Activated B cell treated with CpG ODN at 0.5 μM for 24 hours (primary cell): ENCODE measurements at regions of chr7 and their contacts with region 1.

Region 1: DNA sequence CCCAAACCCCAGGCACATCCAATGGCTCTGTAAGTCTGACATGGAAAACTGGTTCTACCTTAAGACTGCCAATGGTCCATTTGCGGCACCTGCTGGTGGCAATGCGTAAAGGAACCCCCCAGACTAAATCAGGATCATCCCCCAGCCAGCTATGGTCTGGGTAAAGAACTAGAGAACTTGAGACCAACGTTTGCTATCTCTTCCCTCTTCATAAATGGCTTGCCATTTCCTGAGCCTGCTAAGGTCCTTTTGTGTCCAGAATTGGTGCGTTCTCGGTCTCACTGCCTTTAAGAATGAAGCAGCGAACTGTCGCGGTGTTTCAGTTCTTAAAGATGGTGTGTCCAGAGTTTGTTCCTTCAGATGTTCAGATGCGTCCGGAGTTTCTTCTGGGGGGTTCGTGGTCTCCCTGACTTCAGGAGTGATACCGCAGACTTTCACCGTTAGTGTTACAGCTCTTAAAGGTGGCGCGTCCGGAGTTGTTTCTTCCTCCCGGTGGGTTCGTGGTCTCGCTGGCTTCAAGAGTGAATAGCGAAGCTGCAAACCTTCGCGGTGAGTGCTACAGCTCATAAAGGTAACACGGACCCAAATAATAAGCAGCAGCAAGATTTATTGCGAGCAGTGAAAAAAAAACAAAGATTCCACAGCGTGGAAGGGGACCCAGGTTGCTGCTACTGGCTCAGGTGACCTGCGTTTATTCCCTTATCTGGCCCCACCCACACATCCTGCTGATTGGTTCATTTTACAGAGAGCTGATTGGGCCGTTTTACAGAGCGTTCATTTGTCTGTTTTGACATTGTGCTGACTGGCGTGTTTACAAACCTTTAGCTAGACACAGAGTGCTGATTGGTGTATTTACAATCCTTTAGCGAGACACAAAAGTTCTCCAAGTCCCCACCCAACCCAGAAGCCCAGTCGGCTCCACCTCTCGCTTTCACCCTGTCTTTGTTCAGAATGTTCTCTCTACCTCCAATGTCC is 95.4 kb downstream of the ELMO1 start:
- DNase-seq: peak; percentile 44
- ATAC-seq: peak; percentile 70
- H3K4me3 Mint-ChIP-seq: peak overlapping the region; percentile 96
- H3K27ac Mint-ChIP-seq: peak overlapping the region; percentile 86
- H3K4me1 Mint-ChIP-seq: peaks cover 59% of the 10 kb centered on the region
- H3K27me3 Mint-ChIP-seq: no peaks in the 10 kb centered on the region
- CTCF ChIP-seq: peak; percentile 46

Region 2: DNA sequence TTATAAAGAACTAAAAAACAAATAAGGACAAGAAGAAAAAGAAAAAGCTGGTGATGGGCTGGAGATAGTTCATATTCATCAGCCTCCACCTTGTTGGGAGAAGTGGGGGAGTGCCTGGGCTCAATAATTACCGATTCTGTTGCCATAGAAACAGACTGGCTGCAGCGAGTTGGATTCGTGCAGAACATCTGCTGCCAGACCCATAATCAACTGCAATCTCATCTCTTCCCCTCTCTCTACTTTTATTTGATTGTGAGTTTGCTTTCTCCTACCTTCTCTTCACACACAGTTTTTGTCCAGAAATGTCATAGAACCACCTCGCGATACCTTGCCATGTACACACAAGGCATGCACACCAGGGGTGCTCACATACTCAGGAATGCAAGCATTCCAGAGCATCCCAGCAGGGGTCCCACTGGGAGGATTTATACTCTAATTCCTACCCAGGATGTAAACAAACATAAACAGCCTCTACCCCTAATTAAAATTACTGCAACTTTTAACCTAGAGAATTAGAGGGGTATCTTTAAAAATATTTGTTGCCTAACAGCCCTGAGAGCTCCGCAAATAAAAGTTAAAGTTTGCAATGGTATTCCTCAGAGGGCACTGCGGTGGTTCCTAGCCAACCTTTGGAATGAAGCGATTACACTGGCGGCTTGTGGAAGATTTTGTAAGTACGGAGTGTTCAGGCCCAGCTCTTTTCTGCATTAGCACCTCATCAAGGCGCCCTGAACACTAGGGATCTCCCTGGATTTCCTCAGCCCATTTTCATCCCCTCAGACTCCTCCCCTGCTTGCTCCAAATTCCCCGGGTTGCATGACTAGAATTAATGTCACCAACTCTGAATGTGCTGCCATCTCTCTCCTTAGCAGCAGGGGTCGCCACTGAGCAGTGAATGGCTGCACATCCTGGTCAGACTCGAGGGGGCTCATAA is 366.6 kb before region 1 on chr7:
- CTCF ChIA-PET with region 1: no interaction called
- POLR2A ChIA-PET with region 1: no interaction called
- intact Hi-C with region 1: loop called (anchors 5 kb)
- DNase-seq: peak; percentile 30
- ATAC-seq: peak; percentile 71
- H3K4me3 Mint-ChIP-seq: no peak overlapping the region
- H3K27ac Mint-ChIP-seq: no peak overlapping the region
- H3K4me1 Mint-ChIP-seq: peaks cover 33% of the 10 kb centered on the region
- H3K27me3 Mint-ChIP-seq: no peaks in the 10 kb centered on the region
- CTCF ChIP-seq: no peak

Region 3: DNA sequence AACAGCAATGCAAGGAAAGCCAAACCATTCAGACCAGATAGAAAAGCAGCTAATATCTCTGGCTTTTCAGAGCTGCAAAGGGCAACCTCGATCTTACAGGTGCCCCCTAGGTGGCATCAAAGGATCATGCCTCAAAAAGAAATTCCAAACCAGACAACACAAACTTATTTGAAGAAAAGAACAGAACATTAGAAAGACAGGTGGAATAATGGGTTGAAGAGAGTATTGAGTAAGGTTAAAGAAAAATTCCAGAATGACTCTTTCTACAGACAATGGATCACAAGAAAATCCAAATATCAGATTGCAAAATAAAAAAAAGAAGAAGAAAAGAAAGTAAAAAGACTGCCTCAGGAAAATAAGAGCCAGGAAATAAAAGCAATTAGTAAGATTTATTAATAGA is 118.3 kb before region 1 on chr7:
- CTCF ChIA-PET with region 1: interaction called, 86 read pairs
- POLR2A ChIA-PET with region 1: interaction called, 5 read pairs
- intact Hi-C with region 1: loop called (anchors 1 kb)
- DNase-seq: no peak
- ATAC-seq: no peak
- H3K4me3 Mint-ChIP-seq: no peak overlapping the region
- H3K27ac Mint-ChIP-seq: no peak overlapping the region
- H3K4me1 Mint-ChIP-seq: peaks cover 2% of the 10 kb centered on the region
- H3K27me3 Mint-ChIP-seq: no peaks in the 10 kb centered on the region
- CTCF ChIP-seq: no peak

Region 4: DNA sequence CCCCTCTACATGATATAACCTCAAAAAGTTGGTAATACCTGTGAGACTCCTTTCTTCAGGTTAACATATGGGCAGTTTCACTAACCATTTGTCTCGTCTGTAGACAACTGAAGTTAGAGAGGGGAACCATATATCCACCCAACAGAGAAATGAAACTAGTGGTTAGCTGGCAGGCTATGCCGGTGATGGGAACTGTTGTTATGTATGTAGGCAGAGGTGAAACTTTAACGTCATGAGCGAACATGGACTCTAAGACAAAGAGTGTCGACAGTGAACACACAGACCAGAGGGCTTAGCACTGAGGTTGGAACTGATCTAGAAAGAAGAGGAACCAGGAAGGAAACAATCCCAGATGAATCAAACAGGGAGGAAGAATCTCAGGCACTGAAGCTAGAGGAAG is 17.0 kb before region 1 on chr7:
- CTCF ChIA-PET with region 1: interaction called, 26 read pairs
- POLR2A ChIA-PET with region 1: interaction called, 17 read pairs
- intact Hi-C with region 1: loop called (anchors 2 kb)
- DNase-seq: no peak
- ATAC-seq: peak; percentile 92
- H3K4me3 Mint-ChIP-seq: peak overlapping the region; percentile 77
- H3K27ac Mint-ChIP-seq: peak overlapping the region; percentile 95
- H3K4me1 Mint-ChIP-seq: peaks cover 83% of the 10 kb centered on the region
- H3K27me3 Mint-ChIP-seq: no peaks in the 10 kb centered on the region
- CTCF ChIP-seq: no peak

Region 5: GRCh38 chr7:37408291-37409228 is 55.3 kb after region 1 on chr7:
- CTCF ChIA-PET with region 1: interaction called, 8 read pairs
- POLR2A ChIA-PET with region 1: interaction called, 5 read pairs
- intact Hi-C with region 1: loop called (anchors 5 kb)
- DNase-seq: no peak
- ATAC-seq: peak; percentile 59
- H3K4me3 Mint-ChIP-seq: peak overlapping the region; percentile 76
- H3K27ac Mint-ChIP-seq: peak overlapping the region; percentile 73
- H3K4me1 Mint-ChIP-seq: peaks cover 69% of the 10 kb centered on the region
- H3K27me3 Mint-ChIP-seq: no peaks in the 10 kb centered on the region
- CTCF ChIP-seq: no peak

Region 6: DNA sequence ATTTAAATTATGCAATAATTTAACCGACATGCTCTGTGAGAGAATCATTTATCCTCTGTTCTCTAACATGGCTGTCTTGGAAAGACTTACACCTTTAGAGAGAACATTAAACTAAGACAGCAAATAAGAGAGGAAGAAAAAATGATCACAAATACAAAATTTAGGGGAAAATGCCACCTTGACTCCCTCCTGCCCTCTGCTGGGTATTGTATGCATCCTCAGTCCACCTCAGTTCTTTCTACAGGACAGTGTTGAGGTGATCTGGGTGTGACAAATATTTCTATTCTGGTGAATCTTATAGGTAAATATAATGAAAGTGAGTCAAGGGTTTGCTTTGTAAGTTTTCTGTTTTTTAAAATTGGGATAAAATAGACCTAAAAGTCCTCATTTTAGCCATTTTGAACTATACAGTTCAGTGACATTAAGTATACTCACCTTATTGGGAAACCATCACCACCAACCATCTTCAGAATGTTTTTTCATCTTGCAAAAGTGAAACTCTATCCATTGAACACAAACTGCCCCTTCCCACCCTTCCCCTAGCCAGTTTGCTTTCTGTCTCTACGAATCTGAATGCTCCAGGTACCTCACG is 156.9 kb after region 1 on chr7:
- CTCF ChIA-PET with region 1: interaction called, 6 read pairs
- POLR2A ChIA-PET with region 1: no interaction called
- intact Hi-C with region 1: loop called (anchors 5 kb)
- DNase-seq: no peak
- ATAC-seq: peak; percentile 60
- H3K4me3 Mint-ChIP-seq: no peak overlapping the region
- H3K27ac Mint-ChIP-seq: no peak overlapping the region
- H3K4me1 Mint-ChIP-seq: no peaks in the 10 kb centered on the region
- H3K27me3 Mint-ChIP-seq: peaks cover 14% of the 10 kb centered on the region
- CTCF ChIP-seq: no peak